RWPE1 (cell line): ENCODE measurements at regions of chr16 and their contacts with region 1.

Region 1: GRCh38 chr16:361872-362701 is 8.3 kb downstream of the MRPL28 start:
- DNase-seq: peak; percentile 80
- H3K27ac ChIP-seq: peak overlapping the region; percentile 15
- CTCF ChIP-seq: peak; percentile 91

Region 2: GRCh38 chr16:106623-107324 is 255.3 kb before region 1 on chr16:
- CTCF ChIA-PET with region 1: interaction called, 15 read pairs
- POLR2A ChIA-PET with region 1: no interaction called
- DNase-seq: peak; percentile 63
- H3K27ac ChIP-seq: no peak overlapping the region
- CTCF ChIP-seq: peak; percentile 84

Region 3: DNA sequence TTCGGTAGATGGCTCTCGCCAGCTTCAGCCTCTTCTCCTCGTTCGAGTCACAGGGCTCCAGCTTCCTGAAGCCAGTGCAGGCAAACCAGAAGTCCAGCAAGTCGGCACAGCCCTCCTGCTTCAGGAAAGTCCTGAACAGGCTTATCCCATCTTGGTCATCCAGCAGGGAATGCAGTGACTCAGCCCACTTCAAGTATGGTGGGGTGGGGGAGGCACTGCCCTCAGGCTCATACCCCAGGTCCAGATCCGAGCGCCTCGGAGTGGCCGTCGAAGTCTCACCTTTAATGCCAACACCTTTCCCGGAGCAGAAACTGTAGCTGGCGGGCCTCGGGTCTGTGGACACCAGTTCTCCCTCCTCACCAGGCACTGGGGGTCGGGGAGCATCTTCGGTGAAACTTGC is 15.5 kb before region 1 on chr16:
- CTCF ChIA-PET with region 1: interaction called, 15 read pairs
- POLR2A ChIA-PET with region 1: no interaction called
- DNase-seq: peak; percentile 79
- H3K27ac ChIP-seq: peak overlapping the region; percentile 77
- CTCF ChIP-seq: no peak

Region 4: GRCh38 chr16:381789-382717 is 20.0 kb after region 1 on chr16 and contains the start of gene PGAP6:
- CTCF ChIA-PET with region 1: no interaction called
- POLR2A ChIA-PET with region 1: no interaction called
- DNase-seq: peak; percentile 71
- H3K27ac ChIP-seq: peak within 1 kb of the TSS; percentile 73
- CTCF ChIP-seq: no peak

Region 5: GRCh38 chr16:414395-415169 is 52.5 kb after region 1 on chr16:
- CTCF ChIA-PET with region 1: no interaction called
- POLR2A ChIA-PET with region 1: no interaction called
- DNase-seq: no peak
- H3K27ac ChIP-seq: peak overlapping the region; percentile 69
- CTCF ChIP-seq: no peak

Region 6: GRCh38 chr16:430904-431303 is 68.8 kb after region 1 on chr16:
- CTCF ChIA-PET with region 1: no interaction called
- POLR2A ChIA-PET with region 1: no interaction called
- DNase-seq: no peak
- H3K27ac ChIP-seq: no peak overlapping the region
- CTCF ChIP-seq: no peak